Motor neuron (in vitro differentiated cells): ENCODE measurements at regions of chr16 and their contacts with region 1.

Region 1: GRCh38 chr16:49528060-49528865 is 154.7 kb downstream of the C16orf78 start:
- ATAC-seq: peak; percentile 74 to 88 (median 78)
- H3K4me3 ChIP-seq: peak overlapping the region; percentile 3 to 26 (median 20)
- H3K27ac ChIP-seq: peak overlapping the region; percentile 87 to 90
- H3K4me1 ChIP-seq: peaks cover 61 to 62% of the 10 kb centered on the region in 2 donors

Region 2: DNA sequence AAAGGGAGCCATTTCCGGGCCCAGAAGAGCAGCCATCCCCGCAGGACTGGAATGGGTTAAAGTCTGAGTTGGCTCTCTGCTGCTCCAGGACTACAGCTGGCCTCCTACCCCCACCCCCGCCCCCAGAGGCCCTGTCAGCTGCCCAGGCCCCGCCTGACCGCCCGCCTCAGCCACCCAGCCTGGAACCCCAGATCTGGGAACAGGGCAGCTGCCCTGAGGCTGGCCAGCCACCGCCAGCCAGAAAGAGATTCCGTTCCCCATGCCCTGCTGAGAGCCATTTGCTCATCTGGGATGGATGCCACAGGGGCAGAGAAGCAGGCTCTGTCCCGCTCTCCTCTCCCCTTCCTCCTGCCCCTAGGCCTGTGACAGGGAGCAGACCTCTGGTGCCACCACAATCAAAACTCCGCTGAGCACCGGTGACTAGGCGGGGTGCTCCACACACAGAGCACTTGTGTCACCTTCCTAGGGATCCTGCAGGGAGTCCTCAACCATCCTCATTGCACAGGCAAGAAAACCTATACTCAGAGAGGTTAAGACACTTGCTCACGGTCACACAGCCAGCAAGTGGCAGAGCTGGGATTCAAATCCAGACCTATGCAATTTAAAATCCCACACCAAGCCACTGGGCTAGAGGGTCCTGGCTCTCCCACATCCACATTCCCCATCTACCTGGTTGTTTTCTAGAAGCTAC is 283.5 kb after region 1 on chr16:
- in situ Hi-C with region 1: no loop called
- ATAC-seq: peak; percentile 46 to 78 (median 72)
- H3K4me3 ChIP-seq: no peak overlapping the region
- H3K27ac ChIP-seq: peak overlapping the region in 1 of 2 donors; percentile 37
- H3K4me1 ChIP-seq: peaks cover 33 to 40% of the 10 kb centered on the region in 2 donors

Region 3: GRCh38 chr16:49855280-49855821 is 327.1 kb after region 1 on chr16:
- in situ Hi-C with region 1: loop called in 1 of 9 experiments (anchors 25 kb)
- ATAC-seq: peak; percentile 25 to 65 (median 42)
- H3K4me3 ChIP-seq: peak overlapping the region; percentile 65 to 97 (median 71)
- H3K27ac ChIP-seq: peak overlapping the region; percentile 85 to 94
- H3K4me1 ChIP-seq: peaks cover 46 to 51% of the 10 kb centered on the region in 2 donors